Panc1 (cell line): ENCODE measurements at regions of chr2 and their contacts with region 1.

Region 1: DNA sequence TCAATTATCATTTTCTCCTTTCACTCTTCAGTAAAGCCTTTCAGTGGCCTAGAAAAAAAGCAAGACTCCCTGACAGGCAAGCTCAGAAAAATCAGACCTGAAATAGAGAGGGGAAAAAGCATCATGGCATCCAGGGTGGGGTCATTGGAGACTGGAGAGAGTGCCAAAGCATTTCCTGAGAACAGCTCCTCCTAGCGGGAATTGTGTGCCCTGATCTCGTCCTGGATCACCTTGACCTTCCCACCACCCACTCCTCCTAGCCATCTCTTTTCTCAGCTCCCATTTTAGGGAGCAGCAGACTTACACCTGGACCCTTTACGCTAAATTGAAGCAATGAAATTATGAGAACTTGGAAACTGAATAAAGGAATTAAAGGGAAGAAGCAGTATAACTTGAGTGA is 176.6 kb downstream of the VWC2L start:
- DNase-seq: no peak
- ATAC-seq: no peak
- H3K4me3 ChIP-seq: no peak overlapping the region
- H3K27ac ChIP-seq: no peak overlapping the region
- H3K4me1 ChIP-seq: no peaks in the 10 kb centered on the region
- H3K27me3 ChIP-seq: no peaks in the 10 kb centered on the region
- CTCF ChIP-seq: peak; percentile 44

Region 2: DNA sequence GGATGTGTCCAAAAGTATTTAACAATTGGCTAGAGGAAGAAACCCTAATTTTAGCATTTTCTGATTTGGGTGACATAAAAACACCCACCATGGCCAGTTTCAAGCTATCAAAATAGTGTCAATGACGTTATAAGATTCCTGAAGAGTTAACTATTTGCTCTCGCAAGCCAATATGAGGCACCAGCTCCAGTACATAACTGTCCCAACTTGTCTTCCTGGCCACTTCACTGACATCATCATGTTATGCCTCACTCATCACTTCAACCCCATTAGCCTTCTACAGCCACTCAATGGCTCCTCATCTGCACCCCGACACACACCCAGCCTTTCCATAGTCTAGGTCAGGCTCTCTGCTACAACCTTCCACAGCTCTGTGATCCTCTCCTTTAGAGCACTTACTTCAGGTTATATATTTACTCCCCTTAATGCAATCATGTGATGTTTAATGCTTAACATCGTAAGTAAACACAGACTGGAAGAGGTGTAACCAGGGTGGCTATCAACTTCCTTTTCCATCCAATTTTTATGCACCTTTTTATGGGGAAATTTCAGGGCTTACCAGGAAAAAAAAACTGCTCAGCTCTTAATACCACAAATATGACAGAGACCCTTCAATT is 17.9 kb before region 1 on chr2:
- CTCF ChIA-PET with region 1: no interaction called
- POLR2A ChIA-PET with region 1: no interaction called
- in situ Hi-C with region 1: no loop called
- intact Hi-C with region 1: loop called (anchors 1 kb)
- DNase-seq: no peak
- ATAC-seq: no peak
- H3K4me3 ChIP-seq: no peak overlapping the region
- H3K27ac ChIP-seq: no peak overlapping the region
- H3K4me1 ChIP-seq: no peaks in the 10 kb centered on the region
- H3K27me3 ChIP-seq: no peaks in the 10 kb centered on the region
- CTCF ChIP-seq: no peak